ENCODE measurements at regions of chr9 and their contacts with region 1.

Region 1: GRCh38 chr9:97900738-97901565 is 21.3 kb downstream of the TRMO start:
- DNase-seq: peak in 3 of 9 experiments; percentile 28 to 79 (median 67)
- ATAC-seq: no peak
- H3K4me3 ChIP-seq: no peak overlapping the region
- H3K4me3 Mint-ChIP-seq: no peak overlapping the region
- H3K27ac ChIP-seq: peak overlapping the region in 1 of 2 experiments; percentile 17
- H3K27ac Mint-ChIP-seq: peak overlapping the region; percentile 82
- H3K4me1 ChIP-seq: peaks cover 53% of the 10 kb centered on the region
- H3K4me1 Mint-ChIP-seq: peaks cover 53% of the 10 kb centered on the region
- H3K27me3 ChIP-seq: no peaks in the 10 kb centered on the region
- H3K27me3 Mint-ChIP-seq: no peaks in the 10 kb centered on the region
- CTCF ChIP-seq: peak; percentile 75

Region 2: DNA sequence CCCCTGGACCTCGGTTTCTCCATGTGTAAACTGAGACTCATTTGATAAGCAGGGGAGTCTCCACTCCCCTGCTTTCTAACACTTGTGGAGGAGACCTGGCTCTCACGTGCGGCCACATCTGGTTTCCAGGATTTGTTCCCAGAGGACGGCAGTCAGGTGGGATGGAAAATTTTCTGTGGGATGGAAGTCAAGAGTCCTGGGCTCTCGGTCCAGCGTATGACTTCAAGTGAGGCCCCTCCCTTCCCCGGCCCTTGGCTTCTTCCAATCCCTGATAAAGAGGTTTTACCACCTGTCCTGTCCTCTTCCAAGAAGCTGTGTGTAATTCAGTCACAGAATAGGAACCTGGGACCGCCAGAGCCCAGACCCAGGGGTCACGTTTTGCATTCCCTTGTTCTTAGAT is 364.5 kb before region 1 on chr9:
- CTCF ChIA-PET with region 1: no interaction called
- POLR2A ChIA-PET with region 1: no interaction called
- intact Hi-C with region 1: no loop called
- DNase-seq: no peak
- ATAC-seq: no peak
- H3K4me3 ChIP-seq: no peak overlapping the region
- H3K4me3 Mint-ChIP-seq: no peak overlapping the region
- H3K27ac ChIP-seq: no peak overlapping the region
- H3K27ac Mint-ChIP-seq: no peak overlapping the region
- H3K4me1 ChIP-seq: no peaks in the 10 kb centered on the region
- H3K4me1 Mint-ChIP-seq: no peaks in the 10 kb centered on the region
- H3K27me3 ChIP-seq: no peaks in the 10 kb centered on the region
- H3K27me3 Mint-ChIP-seq: peaks cover 9% of the 10 kb centered on the region
- CTCF ChIP-seq: no peak

Region 3: DNA sequence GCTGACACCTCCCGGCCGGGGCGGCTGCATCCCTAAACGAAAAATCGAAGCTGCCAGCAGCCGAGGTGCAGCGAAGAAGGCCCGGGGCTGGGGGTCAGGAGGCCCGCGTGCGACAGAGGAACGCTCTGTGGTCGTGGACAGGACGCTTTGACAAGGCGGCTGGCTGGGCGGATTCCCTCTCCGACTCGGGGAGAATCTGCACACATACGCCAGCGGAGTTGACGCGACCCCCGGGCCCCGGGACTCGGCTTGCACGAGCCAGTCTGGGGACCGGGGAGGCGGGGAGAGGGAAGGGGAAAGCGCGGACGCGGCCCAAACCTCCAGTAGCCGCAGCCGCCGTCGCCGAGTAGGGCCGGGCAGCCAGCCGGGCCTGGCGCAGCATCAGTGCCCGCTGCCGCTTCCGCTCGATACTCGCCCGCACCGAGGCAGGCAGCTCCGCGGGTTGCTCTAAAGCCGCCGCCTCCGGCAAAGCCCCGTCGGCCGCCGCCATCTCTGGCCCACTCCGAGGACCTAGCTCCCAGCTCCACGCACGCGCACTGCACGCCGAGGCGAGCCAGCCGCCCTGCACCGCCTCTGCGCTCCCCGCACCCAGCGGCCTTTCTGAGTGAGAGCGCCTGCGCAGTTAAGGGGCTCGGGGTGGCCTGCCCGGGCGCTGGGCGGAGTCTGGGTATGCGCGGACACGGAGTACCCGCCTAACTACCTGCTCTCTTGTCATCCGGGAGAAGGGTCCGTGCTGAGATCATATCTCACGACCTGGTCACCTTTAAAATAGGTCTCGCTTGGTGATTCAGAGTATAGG is 203.9 kb before region 1 on chr9 and contains the start of gene XPA:
- CTCF ChIA-PET with region 1: interaction called, 7 read pairs
- POLR2A ChIA-PET with region 1: interaction called, 8 read pairs
- intact Hi-C with region 1: loop called in 1 of 2 experiments (anchors 5 kb)
- DNase-seq: peak; percentile 90 to 99 (median 97)
- ATAC-seq: peak; percentile 94
- H3K4me3 ChIP-seq: peak within 1 kb of the TSS; percentile 68 to 79
- H3K4me3 Mint-ChIP-seq: peak within 1 kb of the TSS; percentile 83
- H3K27ac ChIP-seq: peak within 1 kb of the TSS; percentile 60 to 79
- H3K27ac Mint-ChIP-seq: peak within 1 kb of the TSS; percentile 92
- H3K4me1 ChIP-seq: peaks cover 39% of the 10 kb centered on the region
- H3K4me1 Mint-ChIP-seq: peaks cover 53% of the 10 kb centered on the region
- H3K27me3 ChIP-seq: no peaks in the 10 kb centered on the region
- H3K27me3 Mint-ChIP-seq: peaks cover 4% of the 10 kb centered on the region
- CTCF ChIP-seq: no peak
- total RNA-seq, gene XPA: 21.1 to 24.9 TPM

Region 4: GRCh38 chr9:97803167-97804058 is 97.5 kb before region 1 on chr9:
- CTCF ChIA-PET with region 1: no interaction called
- POLR2A ChIA-PET with region 1: no interaction called
- intact Hi-C with region 1: loop called (anchors 2 to 5 kb)
- DNase-seq: peak; percentile 47 to 86 (median 77)
- ATAC-seq: peak; percentile 97
- H3K4me3 ChIP-seq: peak overlapping the region; percentile 43 to 56
- H3K4me3 Mint-ChIP-seq: peak overlapping the region; percentile 81
- H3K27ac ChIP-seq: no peak overlapping the region
- H3K27ac Mint-ChIP-seq: peak overlapping the region; percentile 42
- H3K4me1 ChIP-seq: peaks cover 7% of the 10 kb centered on the region
- H3K4me1 Mint-ChIP-seq: peaks cover 5% of the 10 kb centered on the region
- H3K27me3 ChIP-seq: peaks cover 3 to 5% of the 10 kb centered on the region in 2 experiments
- H3K27me3 Mint-ChIP-seq: peaks cover 13% of the 10 kb centered on the region
- CTCF ChIP-seq: no peak

Region 5: GRCh38 chr9:97880336-97880735 is 20.6 kb before region 1 on chr9:
- CTCF ChIA-PET with region 1: interaction called, 193 read pairs
- POLR2A ChIA-PET with region 1: no interaction called
- intact Hi-C with region 1: no loop called
- DNase-seq: no peak
- ATAC-seq: no peak
- H3K4me3 ChIP-seq: no peak overlapping the region
- H3K4me3 Mint-ChIP-seq: no peak overlapping the region
- H3K27ac ChIP-seq: no peak overlapping the region
- H3K27ac Mint-ChIP-seq: no peak overlapping the region
- H3K4me1 ChIP-seq: no peaks in the 10 kb centered on the region
- H3K4me1 Mint-ChIP-seq: no peaks in the 10 kb centered on the region
- H3K27me3 ChIP-seq: no peaks in the 10 kb centered on the region
- H3K27me3 Mint-ChIP-seq: no peaks in the 10 kb centered on the region
- CTCF ChIP-seq: no peak

Region 6: GRCh38 chr9:97890038-97890437 is 10.9 kb before region 1 on chr9:
- CTCF ChIA-PET with region 1: interaction called, 193 read pairs
- POLR2A ChIA-PET with region 1: interaction called, 7 read pairs
- intact Hi-C with region 1: loop called (anchors 1 kb)
- DNase-seq: peak; percentile 44 to 77 (median 64)
- ATAC-seq: peak; percentile 77
- H3K4me3 ChIP-seq: no peak overlapping the region
- H3K4me3 Mint-ChIP-seq: no peak overlapping the region
- H3K27ac ChIP-seq: no peak overlapping the region
- H3K27ac Mint-ChIP-seq: peak overlapping the region; percentile 27
- H3K4me1 ChIP-seq: no peaks in the 10 kb centered on the region
- H3K4me1 Mint-ChIP-seq: peaks cover 8% of the 10 kb centered on the region
- H3K27me3 ChIP-seq: no peaks in the 10 kb centered on the region
- H3K27me3 Mint-ChIP-seq: no peaks in the 10 kb centered on the region
- CTCF ChIP-seq: peak; percentile 84

Region 7: DNA sequence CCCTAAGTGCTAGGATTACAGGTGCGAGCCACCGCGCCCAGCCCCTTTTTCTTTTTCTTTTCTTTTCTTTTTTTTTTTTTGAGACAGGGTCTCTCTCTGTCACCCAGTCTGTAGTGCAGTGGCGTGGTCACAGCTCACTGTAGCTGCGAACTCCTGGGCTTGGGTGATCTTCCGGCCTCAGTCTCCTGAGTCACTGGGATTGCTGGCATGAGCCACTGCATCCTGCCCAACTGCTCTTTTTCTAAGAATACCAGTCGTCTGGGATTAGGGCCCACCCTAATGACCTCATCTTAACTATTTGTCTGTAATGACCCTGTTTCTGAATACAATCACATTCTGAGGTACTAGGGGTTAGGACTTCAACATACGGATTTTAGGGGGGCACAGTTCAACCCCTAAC is 121.5 kb after region 1 on chr9:
- CTCF ChIA-PET with region 1: no interaction called
- POLR2A ChIA-PET with region 1: no interaction called
- intact Hi-C with region 1: no loop called
- DNase-seq: peak in 1 of 9 experiments; percentile 1
- ATAC-seq: no peak
- H3K4me3 ChIP-seq: no peak overlapping the region
- H3K4me3 Mint-ChIP-seq: no peak overlapping the region
- H3K27ac ChIP-seq: no peak overlapping the region
- H3K27ac Mint-ChIP-seq: no peak overlapping the region
- H3K4me1 ChIP-seq: no peaks in the 10 kb centered on the region
- H3K4me1 Mint-ChIP-seq: no peaks in the 10 kb centered on the region
- H3K27me3 ChIP-seq: no peaks in the 10 kb centered on the region
- H3K27me3 Mint-ChIP-seq: no peaks in the 10 kb centered on the region
- CTCF ChIP-seq: no peak